Left cardiac atrium (tissue), 4 donors: ENCODE measurements at regions of chr4 and their contacts with region 1.

Region 1: DNA sequence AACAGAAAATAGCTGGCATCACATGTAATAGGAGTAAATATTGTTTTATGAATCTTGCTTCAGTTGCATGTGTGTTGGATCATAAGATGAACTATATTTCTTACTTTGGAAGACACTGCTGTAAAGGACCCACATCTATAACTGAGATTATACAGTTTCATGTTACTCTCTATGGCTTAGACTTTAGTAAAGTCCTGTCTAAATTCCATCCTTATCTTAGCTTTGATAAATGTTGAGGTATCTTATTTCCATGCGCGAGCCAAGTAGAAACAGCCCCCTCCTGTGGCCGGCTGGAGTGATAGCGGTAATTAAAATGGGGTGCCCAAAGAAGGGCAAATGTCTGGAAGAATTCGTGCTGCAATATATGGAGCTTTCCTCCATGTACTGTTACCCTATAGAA is 43.0 kb downstream of the CCDC158 start:
- DNase-seq: no peak
- ATAC-seq: peak; percentile 27 to 46

Region 2: DNA sequence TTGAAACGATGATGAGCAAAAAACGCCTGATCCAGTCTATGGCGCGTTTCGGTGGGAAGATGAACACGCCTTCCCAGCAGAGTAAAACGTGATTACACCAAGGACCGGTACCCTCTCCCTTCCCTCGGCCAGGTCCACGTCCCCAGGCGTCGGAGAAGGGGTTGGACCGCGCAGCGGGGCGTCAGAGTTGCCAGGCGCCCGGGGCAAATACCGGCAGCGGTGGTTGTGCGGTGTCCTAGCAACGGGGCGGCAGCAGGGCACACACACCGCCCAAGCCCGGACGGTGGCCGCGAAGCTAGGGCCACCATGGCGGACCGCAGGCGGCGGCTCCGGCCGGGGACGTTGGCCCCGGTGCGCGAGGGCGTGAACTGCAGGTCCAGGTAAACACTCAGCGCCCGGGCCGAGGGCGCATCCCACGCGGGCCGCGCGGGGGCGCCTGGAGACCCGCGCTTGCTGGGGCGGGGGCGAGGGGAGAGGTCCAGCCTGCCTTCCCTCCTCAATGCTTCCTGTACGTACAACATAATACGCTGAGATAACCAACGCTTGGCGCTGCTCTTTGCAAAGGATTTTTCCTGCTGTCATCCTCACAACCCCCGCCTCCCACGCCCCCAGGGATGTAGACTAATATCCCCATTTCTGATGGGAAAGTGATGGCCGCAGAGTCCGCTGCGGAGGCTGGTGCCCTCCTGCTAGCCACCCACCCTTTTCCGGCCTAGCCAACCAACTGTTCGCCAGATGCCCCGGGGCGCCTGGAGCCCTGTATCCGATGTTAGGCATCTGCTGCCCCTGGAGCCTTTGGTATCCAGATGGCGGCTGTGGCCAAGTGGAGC is 126.3 kb before region 1 on chr4 and contains the start of gene FAM47E:
- intact Hi-C with region 1: loop called in 1 of 2 experiments (anchors 10 kb)
- DNase-seq: peak; percentile 78
- ATAC-seq: peak; percentile 96 to 97
- total RNA-seq, gene FAM47E: 2.2 to 2.9 TPM

Region 3: GRCh38 chr4:76311896-76312331 is 66.0 kb before region 1 on chr4:
- intact Hi-C with region 1: loop called in 1 of 2 experiments (anchors 10 kb)
- DNase-seq: no peak
- ATAC-seq: no peak